HEK293T (cell line): ENCODE measurements at regions of chr9 and their contacts with region 1.

Region 1: GRCh38 chr9:113591001-113591898 is 127.7 kb downstream of the RGS3 start:
- DNase-seq: peak; percentile 81

Region 2: GRCh38 chr9:113387560-113388230 is 203.6 kb before region 1 on chr9:
- CTCF ChIA-PET with region 1: no interaction called
- POLR2A ChIA-PET with region 1: no interaction called
- DNase-seq: no peak

Region 3: GRCh38 chr9:113410207-113410864 is 180.9 kb before region 1 on chr9 and contains the starts of genes C9orf43 and POLE3:
- CTCF ChIA-PET with region 1: interaction called, 3 read pairs
- POLR2A ChIA-PET with region 1: interaction called, 11 read pairs
- DNase-seq: peak; percentile 92

Region 4: DNA sequence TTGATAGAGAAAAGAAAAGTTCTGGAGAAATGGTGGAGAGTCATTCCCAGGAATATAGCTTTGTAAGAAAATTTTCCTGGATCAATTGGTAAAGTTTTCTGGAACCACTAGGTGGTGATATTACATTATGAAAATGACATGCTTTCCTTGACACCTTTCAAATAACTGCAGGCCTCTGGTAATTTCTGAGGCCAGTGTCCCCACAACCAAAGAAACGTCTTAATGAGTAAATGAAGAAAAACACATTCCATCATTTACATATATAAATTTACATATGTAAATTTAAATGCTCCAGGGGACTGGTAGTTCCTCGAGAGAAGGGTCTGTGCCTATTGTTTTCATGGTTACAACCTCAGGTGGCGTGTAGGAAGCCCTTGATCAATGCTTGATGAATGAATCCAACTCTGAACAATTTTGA is 144.9 kb before region 1 on chr9:
- CTCF ChIA-PET with region 1: interaction called, 38 read pairs
- POLR2A ChIA-PET with region 1: no interaction called
- DNase-seq: peak; percentile 50

Region 5: DNA sequence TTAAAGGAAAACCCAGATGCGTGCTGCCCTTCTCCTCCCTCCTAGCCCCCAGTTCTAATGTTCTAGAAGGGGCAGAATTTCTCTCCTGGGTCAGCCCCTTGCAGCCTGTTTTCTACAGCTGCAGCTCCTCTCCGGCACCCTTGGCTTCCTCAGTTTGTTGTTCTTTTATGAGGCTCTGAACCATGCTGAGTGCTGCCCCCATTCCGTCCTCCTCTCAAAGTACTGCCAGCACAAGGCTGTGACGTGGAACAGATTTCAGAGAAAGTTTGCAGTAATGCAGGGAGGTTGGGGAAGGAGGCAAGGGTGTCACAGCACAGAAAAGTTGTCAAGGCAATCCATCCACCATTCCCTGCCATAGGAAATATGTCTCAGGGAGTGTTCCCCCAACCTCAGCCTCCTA is 64.4 kb before region 1 on chr9:
- CTCF ChIA-PET with region 1: no interaction called
- POLR2A ChIA-PET with region 1: no interaction called
- DNase-seq: no peak

Region 6: GRCh38 chr9:113602126-113603044 is 11.1 kb after region 1 on chr9:
- CTCF ChIA-PET with region 1: interaction called, 7 read pairs
- POLR2A ChIA-PET with region 1: interaction called, 14 read pairs
- DNase-seq: peak; percentile 33

Region 7: GRCh38 chr9:113614843-113615648 is 23.8 kb after region 1 on chr9:
- CTCF ChIA-PET with region 1: no interaction called
- POLR2A ChIA-PET with region 1: no interaction called
- DNase-seq: no peak

Region 8: DNA sequence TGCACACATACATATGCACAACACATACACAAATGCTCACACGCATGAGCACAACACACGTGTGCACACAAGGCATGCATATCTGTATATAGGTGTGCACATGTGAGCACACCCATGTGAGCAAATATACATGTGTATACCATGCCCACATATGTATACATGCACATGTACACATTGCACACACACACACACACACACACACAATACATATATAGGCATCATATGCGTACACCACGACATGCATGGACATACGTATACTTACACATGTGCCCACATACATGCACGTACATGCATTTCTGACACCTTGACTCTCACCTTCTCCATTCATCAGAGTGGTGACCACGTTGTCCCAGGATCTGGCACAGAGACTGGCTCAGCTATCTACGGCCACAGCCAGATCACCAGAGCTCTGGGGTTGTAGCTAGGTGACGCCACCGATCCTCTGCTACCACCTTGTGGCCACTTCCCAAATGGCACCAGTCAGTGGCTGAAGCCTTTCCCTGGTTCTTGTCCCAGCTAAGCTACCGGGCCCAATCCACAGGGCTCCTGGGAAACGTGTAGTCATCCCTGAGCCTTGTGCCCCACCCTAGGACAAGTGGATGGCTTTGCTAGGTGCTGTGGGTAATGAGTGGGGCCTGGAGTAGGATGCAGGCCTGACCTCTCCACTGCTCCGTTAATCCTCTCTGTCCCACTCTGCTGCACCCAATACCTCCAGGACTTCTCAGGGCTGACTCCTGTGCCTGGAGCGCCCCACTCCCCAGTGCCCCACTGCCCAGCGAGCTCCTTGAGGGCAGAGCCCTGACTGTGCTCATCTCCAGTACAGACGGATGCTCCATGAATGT is 66.7 kb after region 1 on chr9:
- CTCF ChIA-PET with region 1: interaction called, 200 read pairs
- POLR2A ChIA-PET with region 1: interaction called, 15 read pairs
- DNase-seq: peak; percentile 86

Region 9: GRCh38 chr9:113678119-113678858 is 87.0 kb after region 1 on chr9:
- CTCF ChIA-PET with region 1: no interaction called
- POLR2A ChIA-PET with region 1: no interaction called
- DNase-seq: no peak